Activated naive CD4-positive, alpha-beta T cell treated with anti-CD3 and anti-CD28 coated beads, Interleukin-2, amount 10 ng/mL, durations not matched to agents 7 days and 5 days (primary cell): ENCODE measurements at regions of chr14 and their contacts with region 1.

Region 1: DNA sequence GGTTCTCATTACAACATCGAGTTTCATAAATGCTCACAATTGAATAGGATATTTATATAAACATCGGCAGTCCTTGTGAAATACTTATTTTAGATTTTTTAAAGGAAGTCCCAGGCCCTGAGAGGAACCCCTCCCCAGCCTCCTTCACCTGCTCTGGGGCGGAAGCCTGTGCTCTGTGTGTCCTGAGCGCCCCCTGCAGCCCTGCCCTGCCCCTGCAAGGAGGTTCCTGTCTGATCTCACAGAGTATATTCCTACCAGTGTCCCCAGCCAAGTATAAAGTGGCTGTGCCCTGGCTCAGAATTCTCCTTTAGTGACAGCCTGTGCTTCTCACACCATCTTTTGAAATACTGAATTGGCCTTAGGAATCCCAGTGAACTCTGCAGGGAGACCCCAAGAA is 659.5 kb downstream of the TMEM121 start:
- DNase-seq: peak; percentile 82
- H3K4me3 Mint-ChIP-seq: no peak overlapping the region
- H3K27ac Mint-ChIP-seq: peak overlapping the region; percentile 36
- H3K4me1 Mint-ChIP-seq: peaks cover 33% of the 10 kb centered on the region
- H3K27me3 Mint-ChIP-seq: peaks cover 21% of the 10 kb centered on the region

Region 2: GRCh38 chr14:106174206-106174605 is 11.6 kb before region 1 on chr14:
- CTCF ChIA-PET with region 1: interaction called, 27 read pairs
- DNase-seq: peak; percentile 77
- H3K4me3 Mint-ChIP-seq: peak overlapping the region; percentile 16
- H3K27ac Mint-ChIP-seq: peak overlapping the region; percentile 90
- H3K4me1 Mint-ChIP-seq: peaks cover 72% of the 10 kb centered on the region
- H3K27me3 Mint-ChIP-seq: peaks cover 21% of the 10 kb centered on the region

Region 3: GRCh38 chr14:106200541-106201315 is 14.9 kb after region 1 on chr14:
- CTCF ChIA-PET with region 1: interaction called, 12 read pairs
- DNase-seq: peak; percentile 59
- H3K4me3 Mint-ChIP-seq: peak overlapping the region; percentile 48
- H3K27ac Mint-ChIP-seq: no peak overlapping the region
- H3K4me1 Mint-ChIP-seq: peaks cover 22% of the 10 kb centered on the region
- H3K27me3 Mint-ChIP-seq: peaks cover 69% of the 10 kb centered on the region

Region 4: DNA sequence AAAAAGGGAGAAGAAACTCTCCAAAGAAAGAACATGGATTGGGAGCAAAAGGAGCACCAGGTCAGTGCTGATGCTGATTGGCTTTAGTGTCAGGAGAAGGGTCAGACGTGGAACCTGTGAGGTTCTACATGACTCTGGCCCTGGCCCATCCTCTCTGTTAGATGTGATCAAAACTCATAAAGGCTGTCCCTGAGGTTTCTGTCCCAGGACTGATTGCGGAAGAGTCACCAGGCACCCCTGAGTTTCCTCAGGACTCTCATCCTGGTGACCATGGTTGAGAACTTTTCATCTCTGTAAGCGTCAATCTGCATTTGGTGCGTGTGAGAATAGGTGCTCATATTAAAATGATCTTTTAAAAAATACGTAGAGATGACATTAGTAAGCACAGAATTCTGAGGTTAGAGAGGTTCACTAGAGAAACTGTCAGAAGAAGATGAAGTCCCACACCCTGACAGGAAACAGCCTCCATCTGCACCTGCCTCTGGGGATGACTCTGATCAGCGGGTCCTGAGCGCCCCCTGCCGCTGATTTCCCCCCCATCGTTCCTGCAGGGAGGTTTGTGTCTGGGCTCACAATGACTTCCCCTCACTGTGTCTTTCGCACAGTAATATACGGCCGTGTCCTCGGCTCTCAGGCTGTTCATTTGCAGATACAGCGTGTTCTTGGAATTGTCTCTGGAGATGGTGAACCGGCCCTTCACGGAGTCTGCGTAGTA is 82.3 kb after region 1 on chr14:
- CTCF ChIA-PET with region 1: interaction called, 10 read pairs
- DNase-seq: peak; percentile 91
- H3K4me3 Mint-ChIP-seq: no peak overlapping the region
- H3K27ac Mint-ChIP-seq: no peak overlapping the region
- H3K4me1 Mint-ChIP-seq: peaks cover 10% of the 10 kb centered on the region
- H3K27me3 Mint-ChIP-seq: peaks cover 36% of the 10 kb centered on the region